HepG2 (cell line): ENCODE measurements at regions of chr2 and their contacts with region 1.

Region 1: GRCh38 chr2:240851078-240851991 is 17.3 kb upstream of the AGXT start:
- DNase-seq: peak; percentile 75
- ATAC-seq: peak; percentile 93
- H3K4me3 ChIP-seq: no peak overlapping the region; a peak in 1 of 6 replicates
- H3K27ac ChIP-seq: no peak overlapping the region
- H3K4me1 ChIP-seq: peaks cover 14% of the 10 kb centered on the region
- H3K27me3 ChIP-seq: peaks cover 3 to 39% of the 10 kb centered on the region in 2 experiments; a peak in 4 of 5 replicates
- CTCF ChIP-seq: peak; percentile 100
- EP300 ChIP-seq: no peak
- POLR2A ChIP-seq: no peak
- RAD21 ChIP-seq: peak; percentile 98

Region 2: GRCh38 chr2:240913810-240914644 is 62.7 kb after region 1 on chr2:
- CTCF ChIA-PET with region 1: interaction called, 25 read pairs
- POLR2A ChIA-PET with region 1: no interaction called
- in situ Hi-C with region 1: no loop called
- intact Hi-C with region 1: loop called (anchors 2 kb)
- DNase-seq: peak; percentile 43
- ATAC-seq: peak; percentile 75
- H3K4me3 ChIP-seq: peak overlapping the region in 2 of 3 experiments; percentile 25 to 68; a peak in 3 of 6 replicates
- H3K27ac ChIP-seq: no peak overlapping the region
- H3K4me1 ChIP-seq: peaks cover 40% of the 10 kb centered on the region
- H3K27me3 ChIP-seq: peaks cover 8 to 74% of the 10 kb centered on the region in 2 experiments; a peak in 4 of 5 replicates
- CTCF ChIP-seq: peak; percentile 98
- EP300 ChIP-seq: no peak
- POLR2A ChIP-seq: no peak
- RAD21 ChIP-seq: peak; percentile 90

Region 3: DNA sequence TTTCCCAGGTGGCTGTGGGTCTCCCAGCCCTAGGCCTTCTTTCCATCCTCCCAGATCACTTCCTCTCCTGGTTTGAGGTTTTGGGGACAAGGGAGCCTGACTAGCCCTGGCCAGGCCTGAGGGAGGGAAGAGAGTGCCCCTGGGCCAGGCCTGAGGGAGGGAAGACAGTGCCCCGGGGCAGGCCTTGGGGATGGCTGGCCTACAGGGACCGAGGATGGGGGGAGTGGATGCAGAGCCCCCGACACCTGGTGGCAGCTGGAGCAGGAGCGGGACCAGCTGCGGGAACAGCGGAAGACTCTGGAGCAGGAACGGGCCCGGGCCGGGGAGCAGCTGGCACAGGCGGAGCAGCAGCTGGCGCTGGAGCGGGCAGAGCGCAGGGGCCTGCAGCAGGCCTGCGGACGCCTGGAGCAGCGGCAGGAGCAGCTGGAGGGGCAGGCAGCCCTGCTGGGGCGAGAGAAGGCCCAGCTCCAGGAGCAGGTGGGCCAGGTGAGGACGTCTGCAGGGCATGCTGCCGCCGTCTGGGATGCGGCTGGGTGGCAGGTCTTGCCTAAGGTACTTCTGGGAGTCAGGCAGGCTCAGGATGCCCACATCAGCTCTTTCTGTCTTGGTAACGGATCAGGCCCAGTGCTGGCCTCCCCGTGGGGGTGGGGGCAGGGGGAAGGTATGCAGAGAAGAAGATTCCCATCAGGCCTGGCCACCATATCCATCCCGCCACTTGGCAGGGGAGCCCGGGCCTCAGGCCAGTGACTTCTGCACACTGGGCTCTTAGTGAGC is 84.0 kb after region 1 on chr2:
- CTCF ChIA-PET with region 1: no interaction called
- POLR2A ChIA-PET with region 1: no interaction called
- in situ Hi-C with region 1: no loop called
- intact Hi-C with region 1: no loop called
- DNase-seq: no peak
- ATAC-seq: no peak
- H3K4me3 ChIP-seq: no peak overlapping the region
- H3K27ac ChIP-seq: no peak overlapping the region
- H3K4me1 ChIP-seq: no peaks in the 10 kb centered on the region
- H3K27me3 ChIP-seq: peaks cover 16 to 68% of the 10 kb centered on the region in 2 experiments; a peak in 4 of 5 replicates
- CTCF ChIP-seq: no peak
- EP300 ChIP-seq: no peak
- POLR2A ChIP-seq: no peak
- RAD21 ChIP-seq: no peak

Region 4: GRCh38 chr2:240998120-240998994 is 147.0 kb after region 1 on chr2 and contains the start of gene SNED1:
- CTCF ChIA-PET with region 1: no interaction called
- POLR2A ChIA-PET with region 1: no interaction called
- in situ Hi-C with region 1: loop called (anchors 5 kb)
- intact Hi-C with region 1: no loop called
- DNase-seq: peak; percentile 65
- ATAC-seq: peak; percentile 76
- H3K4me3 ChIP-seq: peak within 1 kb of the TSS; percentile 53 to 77 (median 64)
- H3K27ac ChIP-seq: no peak within 1 kb of the TSS
- H3K4me1 ChIP-seq: peaks cover 47% of the 10 kb centered on the region
- H3K27me3 ChIP-seq: peaks cover 23 to 62% of the 10 kb centered on the region in 2 experiments; a peak in 4 of 5 replicates
- CTCF ChIP-seq: peak; percentile 26
- EP300 ChIP-seq: no peak
- POLR2A ChIP-seq: no peak
- RAD21 ChIP-seq: no peak
- total RNA-seq, gene SNED1: 0.15 TPM in 1 of 2 replicates, not detected in the other

Region 5: DNA sequence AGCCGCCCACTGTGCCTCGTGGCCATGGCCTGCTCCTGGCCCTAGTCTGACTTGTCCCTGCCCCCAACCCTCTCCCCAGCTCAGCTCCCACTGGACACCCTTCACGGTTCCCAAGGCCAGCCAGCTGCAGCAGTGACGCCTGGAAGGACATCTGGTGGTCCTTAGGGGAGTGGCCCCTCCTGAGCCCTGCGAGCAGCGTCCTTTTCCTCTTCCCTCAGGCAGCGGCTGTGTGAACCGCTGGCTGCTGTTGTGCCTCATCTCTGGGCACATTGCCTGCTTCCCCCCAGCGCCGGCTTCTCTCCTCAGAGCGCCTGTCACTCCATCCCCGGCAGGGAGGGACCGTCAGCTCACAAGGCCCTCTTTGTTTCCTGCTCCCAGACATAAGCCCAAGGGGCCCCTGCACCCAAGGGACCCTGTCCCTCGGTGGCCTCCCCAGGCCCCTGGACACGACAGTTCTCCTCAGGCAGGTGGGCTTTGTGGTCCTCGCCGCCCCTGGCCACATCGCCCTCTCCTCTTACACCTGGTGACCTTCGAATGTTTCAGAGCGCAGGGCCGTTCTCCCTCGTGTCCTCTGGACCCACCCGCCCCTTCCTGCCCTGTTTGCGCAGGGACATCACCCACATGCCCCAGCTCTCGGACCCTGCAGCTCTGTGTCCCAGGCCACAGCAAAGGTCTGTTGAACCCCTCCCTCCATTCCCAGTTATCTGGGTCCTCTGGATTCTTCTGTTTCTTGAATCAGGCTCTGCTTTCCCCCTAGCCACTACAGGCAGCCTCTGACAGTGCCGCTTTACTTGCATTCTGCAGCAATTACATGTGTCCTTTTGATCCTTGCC is 372.9 kb after region 1 on chr2:
- CTCF ChIA-PET with region 1: no interaction called
- POLR2A ChIA-PET with region 1: no interaction called
- in situ Hi-C with region 1: no loop called
- intact Hi-C with region 1: loop called (anchors 10 kb)
- DNase-seq: peak; percentile 87
- ATAC-seq: peak; percentile 73
- H3K4me3 ChIP-seq: peak overlapping the region; percentile 19 to 70 (median 24); a peak in 5 of 6 replicates
- H3K27ac ChIP-seq: peak overlapping the region; percentile 78
- H3K4me1 ChIP-seq: peaks cover 62% of the 10 kb centered on the region
- H3K27me3 ChIP-seq: no peaks in the 10 kb centered on the region
- CTCF ChIP-seq: peak; percentile 42
- EP300 ChIP-seq: no peak; a peak in 1 of 4 replicates
- POLR2A ChIP-seq: no peak; a peak in 1 of 4 replicates
- RAD21 ChIP-seq: peak; percentile 14